ENCODE measurements at regions of chr1 and their contacts with region 1.

Region 1: GRCh38 chr1:208184088-208184911 is 59.9 kb downstream of the PLXNA2 start:
- DNase-seq: peak; percentile 82 to 83
- H3K4me3 ChIP-seq: no peak overlapping the region
- H3K27ac ChIP-seq: peak overlapping the region; percentile 49 to 56
- H3K4me1 ChIP-seq: peaks cover 0 to 61% (median 45%) of the 10 kb centered on the region in 4 donors
- H3K27me3 ChIP-seq: no peaks in the 10 kb centered on the region
- CTCF ChIP-seq: no peak

Region 2: DNA sequence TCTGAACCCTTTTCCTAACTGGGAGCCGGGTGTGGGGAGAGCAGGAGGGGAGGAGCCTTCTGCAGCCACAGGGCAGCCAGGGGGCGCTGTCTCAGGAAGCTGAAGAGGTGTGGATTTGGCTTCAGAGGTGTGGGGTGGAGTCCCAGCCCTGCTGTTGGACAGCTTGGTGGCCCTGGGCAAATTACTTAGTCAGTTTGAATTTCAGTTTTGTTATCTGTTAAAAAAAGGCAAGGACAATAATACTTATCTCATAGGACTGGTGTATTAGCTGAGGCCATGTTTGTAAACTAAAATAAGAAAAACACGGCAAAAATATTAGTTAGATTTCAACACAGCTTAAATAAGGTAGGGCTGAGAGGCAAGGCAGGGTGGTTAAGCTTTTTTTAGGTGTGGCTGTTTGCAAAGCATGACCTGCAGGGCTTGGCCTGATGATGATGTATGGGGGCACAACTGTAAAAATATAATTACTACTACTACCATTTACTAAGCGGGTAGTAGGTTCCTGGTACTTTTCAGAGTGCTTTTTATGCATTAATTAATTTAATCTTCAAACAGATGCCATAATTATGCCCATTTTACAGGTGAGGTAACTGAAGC is 51.9 kb before region 1 on chr1:
- intact Hi-C with region 1: loop called (anchors 10 kb)
- DNase-seq: peak; percentile 80 to 83
- H3K4me3 ChIP-seq: no peak overlapping the region
- H3K27ac ChIP-seq: no peak overlapping the region
- H3K4me1 ChIP-seq: peaks cover 0 to 47% (median 35%) of the 10 kb centered on the region in 4 donors
- H3K27me3 ChIP-seq: no peaks in the 10 kb centered on the region
- CTCF ChIP-seq: peak; percentile 62 to 72

Measured in tibial artery (tissue), 4 donors.